CD8-positive, alpha-beta T cell (primary cell): ENCODE measurements at regions of chr11 and their contacts with region 1.

Region 1: DNA sequence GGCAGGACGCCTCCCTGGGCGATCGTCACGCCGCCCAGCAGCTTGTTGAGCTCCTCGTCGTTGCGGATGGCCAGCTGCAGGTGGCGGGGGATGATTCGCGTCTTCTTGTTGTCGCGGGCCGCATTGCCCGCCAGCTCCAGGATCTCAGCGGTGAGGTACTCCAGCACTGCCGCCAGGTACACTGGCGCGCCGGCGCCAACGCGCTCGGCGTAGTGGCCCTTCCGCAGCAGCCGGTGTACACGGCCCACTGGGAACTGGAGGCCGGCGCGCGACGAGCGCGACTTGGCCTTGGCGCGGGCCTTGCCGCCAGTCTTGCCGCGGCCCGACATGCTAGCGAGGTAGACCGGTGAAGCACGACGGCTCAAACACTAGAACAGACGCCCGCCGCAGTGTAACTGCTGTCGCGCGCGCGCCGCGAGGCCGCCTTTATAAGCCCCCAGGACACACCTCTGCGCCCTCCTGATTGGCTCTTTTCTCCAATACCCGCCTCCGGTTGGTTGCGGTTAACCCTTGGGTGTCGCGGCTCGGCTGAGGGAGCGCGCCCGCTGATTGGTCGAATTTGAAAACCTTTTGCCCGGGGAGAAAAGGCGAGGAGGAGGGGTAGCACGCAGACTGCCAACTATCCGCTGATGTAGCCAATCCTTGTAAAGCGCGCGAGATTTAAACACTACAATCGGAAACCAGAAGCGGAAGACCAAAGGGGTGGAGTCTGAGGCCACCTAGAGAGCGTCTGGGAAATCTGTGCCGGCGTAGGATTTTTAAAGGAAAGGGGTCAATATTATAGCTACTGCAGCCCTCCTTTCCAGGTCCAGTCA is 6.4 kb downstream of the DPAGT1 start:
- DNase-seq: peak; percentile 98 to 100 (median 99)
- ATAC-seq: peak; percentile 86
- H3K4me3 ChIP-seq: peak overlapping the region; percentile 78 to 88
- H3K4me3 Mint-ChIP-seq: peak overlapping the region; percentile 93
- H3K27ac ChIP-seq: peak overlapping the region; percentile 75 to 78
- H3K27ac Mint-ChIP-seq: peak overlapping the region; percentile 91
- H3K4me1 ChIP-seq: peaks cover 23% of the 10 kb centered on the region
- H3K4me1 Mint-ChIP-seq: peaks cover 34% of the 10 kb centered on the region
- H3K27me3 ChIP-seq: no peaks in the 10 kb centered on the region
- H3K27me3 Mint-ChIP-seq: no peaks in the 10 kb centered on the region
- CTCF ChIP-seq: no peak

Region 2: GRCh38 chr11:118997627-118998387 is 97.5 kb before region 1 on chr11 and contains the start of gene CENATAC:
- CTCF ChIA-PET with region 1: no interaction called
- POLR2A ChIA-PET with region 1: interaction called, 5 read pairs
- intact Hi-C with region 1: loop called in 1 of 2 experiments (anchors 1 kb)
- DNase-seq: peak; percentile 87 to 97 (median 96)
- ATAC-seq: peak; percentile 94
- H3K4me3 ChIP-seq: peak within 1 kb of the TSS; percentile 89 to 95
- H3K4me3 Mint-ChIP-seq: peak within 1 kb of the TSS; percentile 84
- H3K27ac ChIP-seq: peak within 1 kb of the TSS; percentile 59 to 92
- H3K27ac Mint-ChIP-seq: peak within 1 kb of the TSS; percentile 88
- H3K4me1 ChIP-seq: peaks cover 23% of the 10 kb centered on the region
- H3K4me1 Mint-ChIP-seq: peaks cover 36% of the 10 kb centered on the region
- H3K27me3 ChIP-seq: no peaks in the 10 kb centered on the region
- H3K27me3 Mint-ChIP-seq: no peaks in the 10 kb centered on the region
- CTCF ChIP-seq: no peak
- total RNA-seq, gene CENATAC: 103 to 116 TPM

Region 3: GRCh38 chr11:119057000-119057769 is 38.1 kb before region 1 on chr11 and contains the start of gene HYOU1:
- CTCF ChIA-PET with region 1: no interaction called
- POLR2A ChIA-PET with region 1: interaction called, 7 read pairs
- intact Hi-C with region 1: loop called (anchors 1 kb)
- DNase-seq: peak; percentile 97 to 99 (median 98)
- ATAC-seq: peak; percentile 96
- H3K4me3 ChIP-seq: peak within 1 kb of the TSS; percentile 82 to 83
- H3K4me3 Mint-ChIP-seq: peak within 1 kb of the TSS; percentile 96
- H3K27ac ChIP-seq: peak within 1 kb of the TSS; percentile 81 to 85
- H3K27ac Mint-ChIP-seq: peak within 1 kb of the TSS; percentile 96
- H3K4me1 ChIP-seq: peaks cover 21% of the 10 kb centered on the region
- H3K4me1 Mint-ChIP-seq: peaks cover 35% of the 10 kb centered on the region
- H3K27me3 ChIP-seq: no peaks in the 10 kb centered on the region
- H3K27me3 Mint-ChIP-seq: no peaks in the 10 kb centered on the region
- CTCF ChIP-seq: no peak
- total RNA-seq, gene HYOU1: 106 to 109 TPM

Region 4: DNA sequence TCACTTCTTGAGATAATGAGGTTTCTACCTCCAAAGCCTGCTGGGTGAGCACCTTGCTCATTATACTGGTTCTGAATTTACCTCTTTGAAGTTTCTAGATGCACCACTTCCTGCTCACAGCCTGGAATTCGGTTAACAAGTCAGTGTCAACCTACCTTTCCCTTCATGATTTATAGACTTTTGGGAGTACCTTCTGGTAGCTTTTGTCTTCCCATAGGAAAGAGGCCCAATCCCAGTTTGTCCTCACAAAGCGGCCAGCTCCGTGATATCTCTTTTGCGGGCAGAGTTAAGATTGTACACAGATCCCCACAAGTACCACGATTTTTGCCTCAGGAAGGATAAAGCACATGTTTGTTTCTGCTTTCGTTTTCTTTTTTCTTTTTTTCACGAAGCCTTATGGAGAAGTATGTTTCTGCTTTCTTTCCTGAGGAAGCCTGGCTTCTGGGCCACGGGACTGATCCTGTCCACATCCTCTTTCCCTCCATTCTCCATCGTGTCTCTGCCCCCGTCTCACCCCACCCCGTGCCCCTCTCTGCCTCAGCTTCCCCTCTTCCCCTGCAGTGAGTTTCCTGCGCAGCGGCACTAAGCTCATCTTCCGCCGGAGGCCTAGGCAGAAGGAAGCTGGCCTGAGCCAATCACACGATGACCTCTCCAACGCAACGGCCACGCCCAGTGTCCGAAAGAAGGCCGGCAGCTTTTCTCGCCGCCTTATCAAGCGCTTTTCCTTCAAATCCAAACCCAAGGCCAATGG is 20.4 kb after region 1 on chr11:
- CTCF ChIA-PET with region 1: interaction called, 6 read pairs
- POLR2A ChIA-PET with region 1: interaction called, 44 read pairs
- intact Hi-C with region 1: no loop called
- DNase-seq: peak in 4 of 9 experiments; percentile 33 to 69 (median 56)
- ATAC-seq: peak; percentile 89
- H3K4me3 ChIP-seq: peak overlapping the region; percentile 12 to 42
- H3K4me3 Mint-ChIP-seq: peak overlapping the region; percentile 82
- H3K27ac ChIP-seq: peak overlapping the region; percentile 59 to 62
- H3K27ac Mint-ChIP-seq: peak overlapping the region; percentile 96
- H3K4me1 ChIP-seq: peaks cover 35% of the 10 kb centered on the region
- H3K4me1 Mint-ChIP-seq: peaks cover 28% of the 10 kb centered on the region
- H3K27me3 ChIP-seq: no peaks in the 10 kb centered on the region
- H3K27me3 Mint-ChIP-seq: no peaks in the 10 kb centered on the region
- CTCF ChIP-seq: no peak

Region 5: GRCh38 chr11:119196833-119197483 is 101.7 kb after region 1 on chr11:
- CTCF ChIA-PET with region 1: interaction called, 14 read pairs
- POLR2A ChIA-PET with region 1: interaction called, 3 read pairs
- intact Hi-C with region 1: loop called in 1 of 2 experiments (anchors 1 kb)
- DNase-seq: peak; percentile 44 to 87 (median 68)
- ATAC-seq: peak; percentile 97
- H3K4me3 ChIP-seq: no peak overlapping the region
- H3K4me3 Mint-ChIP-seq: no peak overlapping the region
- H3K27ac ChIP-seq: no peak overlapping the region
- H3K27ac Mint-ChIP-seq: no peak overlapping the region
- H3K4me1 ChIP-seq: no peaks in the 10 kb centered on the region
- H3K4me1 Mint-ChIP-seq: peaks cover 4% of the 10 kb centered on the region
- H3K27me3 ChIP-seq: no peaks in the 10 kb centered on the region
- H3K27me3 Mint-ChIP-seq: no peaks in the 10 kb centered on the region
- CTCF ChIP-seq: peak; percentile 81

Region 6: GRCh38 chr11:119290894-119291497 is 195.7 kb after region 1 on chr11:
- CTCF ChIA-PET with region 1: no interaction called
- POLR2A ChIA-PET with region 1: no interaction called
- intact Hi-C with region 1: no loop called
- DNase-seq: no peak
- ATAC-seq: no peak
- H3K4me3 ChIP-seq: no peak overlapping the region
- H3K4me3 Mint-ChIP-seq: no peak overlapping the region
- H3K27ac ChIP-seq: no peak overlapping the region
- H3K27ac Mint-ChIP-seq: no peak overlapping the region
- H3K4me1 ChIP-seq: no peaks in the 10 kb centered on the region
- H3K4me1 Mint-ChIP-seq: peaks cover 2% of the 10 kb centered on the region
- H3K27me3 ChIP-seq: no peaks in the 10 kb centered on the region
- H3K27me3 Mint-ChIP-seq: no peaks in the 10 kb centered on the region
- CTCF ChIP-seq: no peak

Region 7: DNA sequence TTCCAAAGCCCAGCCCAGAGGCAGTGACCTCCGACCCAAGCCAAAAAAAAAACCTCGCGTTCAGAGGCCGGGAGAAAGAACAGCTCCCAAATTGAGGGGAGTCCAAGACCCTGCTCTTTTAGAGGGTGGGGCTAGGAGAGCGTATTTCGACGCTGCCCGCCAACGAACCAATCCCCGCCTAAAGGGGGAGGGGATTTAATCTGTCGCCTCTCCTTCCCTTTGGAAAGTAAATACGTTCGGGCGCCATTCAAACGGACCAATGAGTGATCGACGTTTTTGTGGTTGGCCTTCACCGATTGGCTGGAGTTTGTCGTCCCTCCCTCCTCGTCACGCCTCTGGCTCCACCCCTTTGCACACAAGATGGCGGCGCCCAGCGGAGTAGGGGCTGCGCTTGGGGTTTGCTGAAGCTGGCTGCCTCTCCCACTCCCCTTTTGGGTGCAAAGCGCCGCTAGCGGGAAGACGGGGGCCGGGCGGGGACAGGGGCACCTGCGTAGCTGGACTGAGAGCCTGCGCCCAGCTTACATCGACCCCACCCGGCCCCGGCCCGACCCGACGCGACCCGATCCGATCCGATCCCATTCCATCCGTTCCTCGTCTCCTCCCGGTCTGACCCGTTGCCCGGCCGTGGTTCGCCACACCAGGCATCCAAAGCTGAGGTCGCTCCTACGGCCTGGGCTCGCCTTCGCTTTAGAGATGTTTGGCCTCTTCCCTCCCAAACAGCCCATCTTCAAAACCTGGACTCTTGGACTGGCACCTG is 239.1 kb after region 1 on chr11 and contains the start of gene RNF26:
- CTCF ChIA-PET with region 1: no interaction called
- POLR2A ChIA-PET with region 1: no interaction called
- intact Hi-C with region 1: loop called in 1 of 2 experiments (anchors 1 kb)
- DNase-seq: peak; percentile 88 to 98 (median 93)
- ATAC-seq: peak; percentile 95
- H3K4me3 ChIP-seq: peak within 1 kb of the TSS; percentile 77 to 98
- H3K4me3 Mint-ChIP-seq: peak within 1 kb of the TSS; percentile 98
- H3K27ac ChIP-seq: peak within 1 kb of the TSS; percentile 68 to 86
- H3K27ac Mint-ChIP-seq: peak within 1 kb of the TSS; percentile 97
- H3K4me1 ChIP-seq: peaks cover 13% of the 10 kb centered on the region
- H3K4me1 Mint-ChIP-seq: peaks cover 27% of the 10 kb centered on the region
- H3K27me3 ChIP-seq: peaks cover 10 to 11% of the 10 kb centered on the region in 2 experiments
- H3K27me3 Mint-ChIP-seq: peaks cover 12% of the 10 kb centered on the region
- CTCF ChIP-seq: no peak
- total RNA-seq, gene RNF26: 20.9 TPM